ENCODE measurements at regions of chr1 and their contacts with region 1.

Region 1: GRCh38 chr1:9717193-9718005 is 65.9 kb downstream of the PIK3CD start:
- DNase-seq: peak; percentile 88
- CTCF ChIP-seq: peak; percentile 7

Region 2: DNA sequence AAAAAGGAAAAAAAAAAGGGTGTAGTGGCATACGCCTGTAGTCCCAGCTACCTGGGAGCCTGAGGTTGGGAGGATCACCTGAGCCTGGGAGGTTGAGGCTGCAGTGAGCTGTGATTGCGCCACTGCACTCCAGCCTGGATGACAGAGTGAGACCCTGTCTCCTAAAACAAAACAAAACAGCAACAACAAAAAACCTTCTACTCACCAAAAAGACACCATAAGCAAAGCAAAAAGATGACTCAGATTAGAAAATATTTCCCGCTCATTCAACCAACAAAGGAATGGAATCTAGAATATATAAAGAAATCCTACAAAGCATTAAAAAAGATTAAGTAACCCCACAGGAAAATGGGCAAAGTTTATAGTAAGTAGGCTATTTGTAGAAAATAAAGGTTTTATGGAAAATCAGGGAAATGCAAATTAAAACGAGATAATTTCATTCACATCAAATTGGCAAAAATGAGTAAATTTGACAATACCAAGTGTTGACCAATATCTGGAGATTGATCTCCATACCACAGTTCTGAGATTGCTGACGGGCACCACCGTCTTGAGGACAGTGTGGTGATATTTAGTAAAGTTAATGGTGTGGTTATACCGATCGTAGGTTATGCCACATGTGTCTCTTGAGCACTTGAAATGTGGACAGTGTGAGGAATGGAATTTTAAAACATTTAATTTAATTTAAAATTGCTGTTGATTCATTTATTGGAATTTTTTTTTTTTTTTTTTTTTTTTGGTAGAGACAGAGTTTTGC is 11.9 kb before region 1 on chr1:
- CTCF ChIA-PET with region 1: interaction called, 11 read pairs
- POLR2A ChIA-PET with region 1: interaction called, 3 read pairs
- DNase-seq: no peak
- CTCF ChIP-seq: no peak

Measured in GM10248 (cell line).